Transverse colon (tissue), 4 donors: ENCODE measurements at regions of chr7 and their contacts with region 1.

Region 1: GRCh38 chr7:158023681-158024350 is 563.8 kb downstream of the PTPRN2 start:
- DNase-seq: no peak
- H3K4me3 ChIP-seq: no peak overlapping the region
- H3K27ac ChIP-seq: no peak overlapping the region
- H3K4me1 ChIP-seq: peaks cover 0 to 4% (median 1%) of the 10 kb centered on the region in 4 donors
- H3K27me3 ChIP-seq: no peaks in the 10 kb centered on the region
- CTCF ChIP-seq: no peak
- EP300 ChIP-seq: no peak
- POLR2A ChIP-seq: no peak

Region 2: GRCh38 chr7:157970744-157971143 is 53.1 kb before region 1 on chr7:
- in situ Hi-C with region 1: no loop called
- intact Hi-C with region 1: loop called (anchors 1 kb)
- DNase-seq: no peak
- H3K4me3 ChIP-seq: no peak overlapping the region
- H3K27ac ChIP-seq: no peak overlapping the region
- H3K4me1 ChIP-seq: no peaks in the 10 kb centered on the region
- H3K27me3 ChIP-seq: no peaks in the 10 kb centered on the region
- CTCF ChIP-seq: no peak
- EP300 ChIP-seq: no peak
- POLR2A ChIP-seq: no peak